Breast epithelium (tissue), 4 donors: ENCODE measurements at regions of chr12 and their contacts with region 1.

Region 1: DNA sequence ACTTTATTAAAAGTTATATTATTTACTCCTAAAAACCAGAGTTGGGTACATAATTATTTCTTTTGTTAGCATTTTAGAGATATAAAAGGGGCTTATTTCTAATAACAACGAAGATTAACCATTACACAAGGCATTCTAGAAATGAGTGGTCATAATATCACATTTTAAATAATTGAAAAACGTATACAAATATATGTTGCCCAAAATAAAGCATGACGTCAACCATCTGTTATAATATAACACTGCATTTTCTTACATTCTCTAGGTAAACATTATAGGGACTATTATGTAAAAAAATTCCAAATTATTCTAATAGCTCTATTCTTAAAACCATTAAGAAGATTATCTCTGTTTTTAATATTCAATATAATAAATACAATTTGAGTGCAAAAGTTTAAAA is 455.1 kb upstream of the GARIN6 start:
- DNase-seq: no peak
- H3K4me3 ChIP-seq: no peak overlapping the region
- H3K27ac ChIP-seq: no peak overlapping the region
- H3K4me1 ChIP-seq: no peaks in the 10 kb centered on the region
- H3K27me3 ChIP-seq: no peaks in the 10 kb centered on the region
- CTCF ChIP-seq: no peak
- POLR2A ChIP-seq: no peak

Region 2: GRCh38 chr12:99249543-99249942 is 57.1 kb after region 1 on chr12:
- intact Hi-C with region 1: no loop called
- DNase-seq: no peak
- H3K4me3 ChIP-seq: no peak overlapping the region
- H3K27ac ChIP-seq: no peak overlapping the region
- H3K4me1 ChIP-seq: no peaks in the 10 kb centered on the region
- H3K27me3 ChIP-seq: no peaks in the 10 kb centered on the region
- CTCF ChIP-seq: no peak
- POLR2A ChIP-seq: no peak

Region 3: GRCh38 chr12:99265648-99266047 is 73.2 kb after region 1 on chr12:
- intact Hi-C with region 1: loop called (anchors 2 kb)
- DNase-seq: no peak
- H3K4me3 ChIP-seq: no peak overlapping the region
- H3K27ac ChIP-seq: no peak overlapping the region
- H3K4me1 ChIP-seq: no peaks in the 10 kb centered on the region
- H3K27me3 ChIP-seq: no peaks in the 10 kb centered on the region
- CTCF ChIP-seq: no peak
- POLR2A ChIP-seq: no peak